Activated CD4-positive, alpha-beta T cell treated with anti-CD3 and anti-CD28 coated beads, Interleukin-2, amount 10 ng/mL, durations not matched to agents 7 days and 5 days (primary cell): ENCODE measurements at regions of chr19 and their contacts with region 1.

Region 1: GRCh38 chr19:16062789-16063188 is 13.5 kb upstream of the TPM4 start:
- DNase-seq: peak; percentile 73
- H3K4me3 Mint-ChIP-seq: no peak overlapping the region
- H3K27ac Mint-ChIP-seq: peak overlapping the region; percentile 46
- H3K4me1 Mint-ChIP-seq: peaks cover 32% of the 10 kb centered on the region
- H3K27me3 Mint-ChIP-seq: peaks cover 3% of the 10 kb centered on the region

Region 2: GRCh38 chr19:16051254-16052025 is 11.3 kb before region 1 on chr19:
- CTCF ChIA-PET with region 1: interaction called, 13 read pairs
- POLR2A ChIA-PET with region 1: no interaction called
- DNase-seq: peak; percentile 65
- H3K4me3 Mint-ChIP-seq: no peak overlapping the region
- H3K27ac Mint-ChIP-seq: no peak overlapping the region
- H3K4me1 Mint-ChIP-seq: peaks cover 11% of the 10 kb centered on the region
- H3K27me3 Mint-ChIP-seq: peaks cover 14% of the 10 kb centered on the region

Region 3: GRCh38 chr19:16076154-16076957 is 13.6 kb after region 1 on chr19 and contains the start of gene TPM4:
- CTCF ChIA-PET with region 1: interaction called, 65 read pairs
- POLR2A ChIA-PET with region 1: no interaction called
- DNase-seq: peak; percentile 90
- H3K4me3 Mint-ChIP-seq: peak within 1 kb of the TSS; percentile 83
- H3K27ac Mint-ChIP-seq: peak within 1 kb of the TSS; percentile 95
- H3K4me1 Mint-ChIP-seq: peaks cover 71% of the 10 kb centered on the region
- H3K27me3 Mint-ChIP-seq: no peaks in the 10 kb centered on the region
- total RNA-seq, gene TPM4: 422 to 485 TPM

Region 4: DNA sequence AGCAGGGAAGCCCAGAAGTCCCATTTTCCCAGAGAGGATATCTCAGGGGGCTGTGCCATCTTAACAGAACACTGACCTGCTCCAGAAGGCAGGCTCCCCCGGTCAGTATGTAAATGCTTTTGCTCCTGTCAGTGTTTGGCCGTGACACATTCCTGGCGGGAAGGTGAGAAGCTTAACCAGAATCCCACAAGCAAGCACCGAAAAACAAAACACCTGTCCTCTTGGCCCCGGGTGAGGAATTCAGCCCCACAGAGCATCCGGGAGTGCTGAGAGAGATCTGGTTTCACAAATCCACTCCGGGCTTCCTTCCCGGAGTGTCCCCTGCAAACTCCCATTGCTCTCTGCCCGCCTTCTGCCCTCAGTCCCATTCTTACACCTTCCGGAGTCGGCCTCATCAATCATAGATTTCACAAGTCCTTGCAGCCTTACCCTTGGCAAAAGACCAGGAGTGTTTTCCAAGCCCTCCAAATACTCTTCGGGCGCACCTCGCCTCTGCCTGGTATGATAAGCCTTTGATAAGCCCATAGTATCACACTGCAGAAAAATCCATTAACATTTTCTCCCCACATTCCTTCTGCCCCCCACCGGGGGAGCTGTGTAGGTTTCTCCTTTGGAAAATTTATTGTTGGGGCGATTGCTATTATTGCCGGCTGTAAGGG is 25.7 kb after region 1 on chr19:
- CTCF ChIA-PET with region 1: interaction called, 20 read pairs
- POLR2A ChIA-PET with region 1: no interaction called
- DNase-seq: no peak
- H3K4me3 Mint-ChIP-seq: no peak overlapping the region
- H3K27ac Mint-ChIP-seq: peak overlapping the region; percentile 32
- H3K4me1 Mint-ChIP-seq: peaks cover 66% of the 10 kb centered on the region
- H3K27me3 Mint-ChIP-seq: no peaks in the 10 kb centered on the region

Region 5: DNA sequence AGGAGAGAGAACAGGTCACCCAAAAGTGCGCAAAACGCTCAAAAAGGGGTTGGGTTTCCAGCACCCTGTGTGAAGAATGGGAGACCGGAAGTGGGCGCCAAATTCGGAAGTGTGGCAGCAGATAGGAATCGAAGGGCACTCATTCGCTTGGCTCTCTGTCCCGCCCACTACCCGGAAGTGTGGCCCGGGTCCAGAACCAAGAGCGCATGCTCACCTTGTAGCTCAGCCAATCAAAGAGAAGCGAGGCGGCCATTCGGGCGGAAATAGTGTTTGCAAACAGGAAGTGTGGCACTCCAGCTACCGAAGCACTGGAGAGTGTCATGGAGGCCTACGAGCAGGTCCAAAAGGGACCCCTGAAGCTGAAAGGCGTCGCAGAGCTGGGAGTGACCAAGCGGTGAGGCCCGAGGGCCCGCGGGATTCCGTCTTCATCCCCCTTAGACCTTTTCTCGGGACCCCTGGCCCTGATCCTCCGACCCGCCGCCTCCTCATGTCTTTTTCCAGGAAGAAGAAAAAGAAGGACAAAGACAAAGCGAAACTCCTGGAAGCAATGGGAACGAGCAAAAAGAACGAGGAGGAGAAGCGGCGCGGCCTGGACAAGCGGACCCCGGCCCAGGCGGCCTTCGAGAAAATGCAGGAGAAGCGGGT is 122.5 kb after region 1 on chr19 and contains the start of gene FAM32A:
- CTCF ChIA-PET with region 1: interaction called, 12 read pairs
- POLR2A ChIA-PET with region 1: no interaction called
- DNase-seq: peak; percentile 100
- H3K4me3 Mint-ChIP-seq: peak within 1 kb of the TSS; percentile 95
- H3K27ac Mint-ChIP-seq: peak within 1 kb of the TSS; percentile 97
- H3K4me1 Mint-ChIP-seq: peaks cover 34% of the 10 kb centered on the region
- H3K27me3 Mint-ChIP-seq: peaks cover 3% of the 10 kb centered on the region
- total RNA-seq, gene FAM32A: 64.1 to 76.8 TPM